ENCODE measurements at regions of chr7 and their contacts with region 1.

Region 1: GRCh38 chr7:137898839-137899721 is 52.3 kb upstream of the DGKI start:
- DNase-seq: peak; percentile 78
- H3K4me3 Mint-ChIP-seq: peak overlapping the region; percentile 0
- H3K27ac Mint-ChIP-seq: peak overlapping the region; percentile 52
- H3K4me1 Mint-ChIP-seq: peaks cover 39% of the 10 kb centered on the region
- H3K27me3 Mint-ChIP-seq: no peaks in the 10 kb centered on the region

Region 2: DNA sequence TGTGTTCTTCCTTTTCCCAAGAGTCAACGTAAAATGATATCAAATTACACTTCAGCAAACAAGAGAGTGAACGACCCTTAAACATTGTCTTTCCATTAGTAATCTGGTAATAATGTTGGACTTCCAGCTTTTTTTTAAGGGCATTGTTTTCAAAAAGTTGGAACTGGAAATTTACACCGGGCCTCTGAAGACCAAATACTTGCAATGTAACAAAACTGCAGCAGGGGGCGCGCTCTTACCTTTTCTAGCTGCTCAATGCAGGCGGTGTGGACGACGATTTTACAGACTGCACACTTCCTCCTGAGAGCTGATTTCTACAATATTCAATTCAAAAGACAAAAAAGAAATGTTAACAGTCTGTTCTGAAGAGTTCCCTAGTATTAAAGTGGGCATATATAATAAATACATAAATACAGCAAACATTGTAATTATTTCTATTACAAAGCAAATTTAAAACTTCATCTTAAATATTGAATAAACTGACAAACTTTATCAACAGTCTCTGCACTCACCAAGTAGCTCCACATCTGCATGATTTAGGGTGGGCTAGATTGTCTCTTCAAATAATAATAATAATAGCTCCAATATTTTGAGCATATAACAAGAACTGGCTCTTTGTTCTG is 242.7 kb before region 1 on chr7:
- CTCF ChIA-PET with region 1: interaction called, 51 read pairs
- POLR2A ChIA-PET with region 1: no interaction called
- DNase-seq: peak; percentile 72
- H3K4me3 Mint-ChIP-seq: no peak overlapping the region
- H3K27ac Mint-ChIP-seq: no peak overlapping the region
- H3K4me1 Mint-ChIP-seq: no peaks in the 10 kb centered on the region
- H3K27me3 Mint-ChIP-seq: peaks cover 8% of the 10 kb centered on the region

Region 3: DNA sequence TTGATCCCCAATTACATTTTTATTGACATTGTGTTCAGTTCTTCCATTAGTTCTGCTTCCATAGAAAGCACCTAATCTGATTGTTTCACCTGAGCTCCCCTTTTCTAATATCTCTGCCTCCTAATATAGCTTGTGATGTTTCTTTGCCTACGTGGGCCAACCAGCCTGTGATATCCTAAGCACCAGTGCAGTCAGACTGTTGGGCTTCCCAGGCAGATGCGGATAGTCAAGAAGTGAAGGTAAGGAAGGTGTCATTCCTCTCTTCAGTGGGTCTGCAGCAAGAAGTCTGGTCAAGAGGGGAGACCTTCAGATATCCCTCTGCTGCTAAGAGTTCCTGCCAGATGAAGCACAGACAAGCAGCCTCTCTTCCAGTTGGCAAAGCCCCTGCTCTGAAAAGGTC is 36.1 kb before region 1 on chr7:
- CTCF ChIA-PET with region 1: no interaction called
- POLR2A ChIA-PET with region 1: no interaction called
- DNase-seq: no peak
- H3K4me3 Mint-ChIP-seq: no peak overlapping the region
- H3K27ac Mint-ChIP-seq: no peak overlapping the region
- H3K4me1 Mint-ChIP-seq: peaks cover 3% of the 10 kb centered on the region
- H3K27me3 Mint-ChIP-seq: no peaks in the 10 kb centered on the region

Region 4: GRCh38 chr7:137992550-137993394 is 93.7 kb after region 1 on chr7:
- CTCF ChIA-PET with region 1: interaction called, 17 read pairs
- POLR2A ChIA-PET with region 1: no interaction called
- DNase-seq: peak; percentile 32
- H3K4me3 Mint-ChIP-seq: no peak overlapping the region
- H3K27ac Mint-ChIP-seq: peak overlapping the region; percentile 47
- H3K4me1 Mint-ChIP-seq: peaks cover 39% of the 10 kb centered on the region
- H3K27me3 Mint-ChIP-seq: no peaks in the 10 kb centered on the region

Region 5: GRCh38 chr7:138002096-138002827 is 103.2 kb after region 1 on chr7:
- CTCF ChIA-PET with region 1: interaction called, 117 read pairs
- POLR2A ChIA-PET with region 1: interaction called, 7 read pairs
- DNase-seq: peak; percentile 98
- H3K4me3 Mint-ChIP-seq: peak overlapping the region; percentile 92
- H3K27ac Mint-ChIP-seq: peak overlapping the region; percentile 89
- H3K4me1 Mint-ChIP-seq: peaks cover 34% of the 10 kb centered on the region
- H3K27me3 Mint-ChIP-seq: no peaks in the 10 kb centered on the region

Region 6: DNA sequence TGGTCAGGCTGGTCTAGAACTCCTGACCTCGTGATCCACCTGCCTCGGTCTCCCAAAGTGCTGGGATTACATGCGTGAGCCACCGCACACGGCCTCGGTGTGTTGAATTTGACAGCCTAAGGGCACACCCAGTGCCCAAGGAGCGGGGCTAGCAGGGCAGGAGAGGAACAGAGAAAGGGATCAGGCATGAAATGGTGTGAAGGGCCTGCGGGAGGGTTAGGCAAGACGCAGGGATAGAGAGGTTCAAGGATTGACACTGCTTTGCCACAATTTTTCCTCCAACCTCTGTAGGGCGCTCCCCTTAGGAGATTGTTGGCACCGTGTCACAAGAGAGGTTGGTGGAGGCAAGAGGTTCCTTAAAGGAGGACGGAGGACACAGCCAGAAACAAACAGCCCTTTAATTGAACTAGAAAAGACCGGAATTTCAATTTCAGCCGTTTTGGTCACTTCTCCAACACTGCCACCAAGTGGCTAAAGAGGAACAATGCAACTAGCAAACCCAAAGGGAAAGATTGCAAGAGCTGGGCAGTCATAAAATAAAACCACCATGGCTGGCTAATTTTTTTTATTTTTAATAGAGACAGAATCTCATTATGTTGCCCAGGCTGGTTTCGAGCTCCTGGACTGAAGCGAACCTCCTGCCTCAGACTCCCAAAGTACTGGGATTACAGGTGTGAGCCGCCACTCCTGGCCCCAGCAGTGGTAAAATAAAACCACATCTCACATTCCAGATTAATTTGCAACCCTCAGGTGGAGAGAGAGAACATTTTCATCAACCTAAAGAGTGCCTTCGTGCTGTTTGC is 109.7 kb after region 1 on chr7:
- CTCF ChIA-PET with region 1: interaction called, 117 read pairs
- POLR2A ChIA-PET with region 1: interaction called, 7 read pairs
- DNase-seq: peak; percentile 46
- H3K4me3 Mint-ChIP-seq: no peak overlapping the region
- H3K27ac Mint-ChIP-seq: no peak overlapping the region
- H3K4me1 Mint-ChIP-seq: peaks cover 4% of the 10 kb centered on the region
- H3K27me3 Mint-ChIP-seq: peaks cover 3% of the 10 kb centered on the region

Region 7: DNA sequence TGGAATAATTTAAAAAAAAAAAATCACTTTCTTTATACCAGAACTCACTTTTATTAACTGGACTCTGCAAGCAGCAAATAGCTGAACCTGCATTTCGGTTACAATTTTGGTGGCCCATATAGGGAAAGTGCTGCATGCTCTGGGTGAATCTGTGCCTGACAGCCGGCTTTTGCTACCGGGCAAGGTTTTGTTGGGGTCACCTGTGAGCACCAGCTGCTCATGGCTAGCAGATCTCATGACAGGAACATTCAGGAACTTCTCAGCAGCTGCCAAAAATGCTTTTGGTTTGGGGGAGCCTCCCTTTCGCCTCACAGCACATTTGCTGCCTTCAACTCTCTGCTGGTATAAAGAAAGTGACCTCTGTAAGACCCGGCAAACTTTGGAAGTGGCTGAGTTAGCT is 116.0 kb after region 1 on chr7:
- CTCF ChIA-PET with region 1: interaction called, 35 read pairs
- POLR2A ChIA-PET with region 1: no interaction called
- DNase-seq: no peak
- H3K4me3 Mint-ChIP-seq: no peak overlapping the region
- H3K27ac Mint-ChIP-seq: no peak overlapping the region
- H3K4me1 Mint-ChIP-seq: no peaks in the 10 kb centered on the region
- H3K27me3 Mint-ChIP-seq: no peaks in the 10 kb centered on the region